Right ventricle myocardium inferior (tissue), 1 donor: ENCODE measurements at regions of chr3 and their contacts with region 1.

Region 1: DNA sequence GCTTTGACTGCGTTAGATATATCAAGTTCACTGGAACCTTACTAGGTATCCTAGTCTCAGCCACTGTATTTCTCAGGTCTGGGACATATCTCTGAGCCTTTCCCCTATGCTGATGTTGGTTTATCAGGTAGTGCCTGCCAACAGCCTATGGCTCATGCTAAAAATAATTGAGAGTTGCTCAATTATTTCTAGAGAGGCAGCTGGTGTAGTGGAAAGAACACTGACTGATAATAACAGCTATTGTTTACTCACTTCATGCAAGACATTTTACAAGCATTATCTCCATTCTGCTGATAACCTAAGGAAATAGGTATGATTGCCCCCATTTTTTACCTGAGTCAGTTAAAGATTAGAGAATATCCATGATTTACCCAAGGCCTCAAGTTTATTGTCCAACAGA is 231.4 kb downstream of the LRRN1 start:
- DNase-seq: no peak
- ATAC-seq: peak; percentile 76

Region 2: DNA sequence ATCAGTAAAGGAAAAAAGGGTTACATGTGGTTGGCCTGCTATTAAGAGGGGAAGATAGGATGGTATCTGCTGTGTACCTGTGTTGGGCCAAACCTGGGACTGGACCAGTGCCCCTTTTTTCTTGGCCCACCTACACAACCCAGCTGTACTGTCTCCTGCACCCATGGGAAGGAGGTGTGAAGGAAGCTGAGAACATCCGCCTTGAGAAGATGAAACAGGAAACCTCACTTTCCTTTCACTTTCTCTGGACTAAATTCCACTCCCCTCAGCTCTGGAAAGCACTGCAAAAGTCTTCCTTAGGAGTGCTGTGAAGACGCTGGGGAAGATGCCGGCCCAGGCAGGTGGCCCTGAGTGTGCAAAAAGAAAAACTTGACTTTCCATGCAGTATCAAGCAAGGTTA is 193.8 kb before region 1 on chr3:
- intact Hi-C with region 1: no loop called
- DNase-seq: no peak
- ATAC-seq: no peak

Region 3: GRCh38 chr3:4060064-4060463 is 29.4 kb after region 1 on chr3:
- intact Hi-C with region 1: loop called (anchors 2 kb)
- DNase-seq: no peak
- ATAC-seq: peak; percentile 70